ENCODE measurements at regions of chr4 and their contacts with region 1.

Region 1: DNA sequence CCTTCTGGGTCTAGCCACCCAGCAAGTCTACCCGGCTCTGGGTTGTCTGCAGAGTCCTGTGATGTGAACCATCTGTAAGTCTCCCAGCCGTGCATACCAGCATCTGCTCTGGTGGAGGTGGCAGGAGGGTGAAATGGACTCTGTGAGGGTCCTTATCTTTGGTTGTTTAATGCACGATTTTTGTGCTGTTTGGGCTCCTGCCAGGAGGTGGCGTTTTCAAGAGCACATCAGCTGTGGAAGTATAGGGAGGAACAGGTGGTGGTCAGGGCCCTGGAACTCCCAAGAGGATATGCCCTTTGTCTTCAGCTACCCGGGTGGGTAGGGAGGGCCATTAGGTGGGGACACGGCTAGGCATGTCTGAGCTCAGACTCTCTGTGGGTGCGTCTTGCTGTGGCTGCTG is 66.5 kb upstream of the ZFP42 start:
- DNase-seq: peak; percentile 15 to 75
- H3K4me3 ChIP-seq: no peak overlapping the region
- H3K27ac ChIP-seq: no peak overlapping the region
- H3K4me1 ChIP-seq: no peaks in the 10 kb centered on the region; a peak in 1 of 7 replicates
- H3K27me3 ChIP-seq: no peaks in the 10 kb centered on the region
- CTCF ChIP-seq: peak; percentile 52 to 71 (median 56)
- EP300 ChIP-seq: no peak
- POLR2A ChIP-seq: no peak
- RAD21 ChIP-seq: peak; percentile 56 to 61

Region 2: DNA sequence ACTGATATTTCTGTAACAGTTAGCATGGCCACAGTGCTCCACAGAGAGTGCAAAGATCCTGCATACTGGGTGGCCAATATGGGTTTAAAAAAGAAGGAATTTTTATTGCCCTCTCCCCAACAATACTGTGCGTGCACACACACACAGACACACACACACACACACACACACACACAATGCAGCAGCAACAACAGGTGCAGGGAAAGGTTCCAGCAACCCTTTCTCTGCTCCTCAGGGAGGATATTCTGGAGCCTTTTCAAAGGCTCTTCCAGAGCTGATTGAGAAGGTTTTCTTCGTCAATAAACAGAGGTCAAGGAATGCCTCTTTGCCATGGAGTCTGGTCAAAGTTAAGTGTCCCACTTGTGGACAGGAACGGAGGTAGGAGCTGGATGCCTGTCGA is 18.3 kb before region 1 on chr4:
- CTCF ChIA-PET with region 1: interaction called, 23 read pairs
- POLR2A ChIA-PET with region 1: no interaction called
- DNase-seq: no peak
- H3K4me3 ChIP-seq: no peak overlapping the region
- H3K27ac ChIP-seq: no peak overlapping the region
- H3K4me1 ChIP-seq: no peaks in the 10 kb centered on the region
- H3K27me3 ChIP-seq: no peaks in the 10 kb centered on the region
- CTCF ChIP-seq: no peak
- EP300 ChIP-seq: no peak
- POLR2A ChIP-seq: no peak
- RAD21 ChIP-seq: no peak